Mammary epithelial cell (primary cell): ENCODE measurements at regions of chr5 and their contacts with region 1.

Region 1: DNA sequence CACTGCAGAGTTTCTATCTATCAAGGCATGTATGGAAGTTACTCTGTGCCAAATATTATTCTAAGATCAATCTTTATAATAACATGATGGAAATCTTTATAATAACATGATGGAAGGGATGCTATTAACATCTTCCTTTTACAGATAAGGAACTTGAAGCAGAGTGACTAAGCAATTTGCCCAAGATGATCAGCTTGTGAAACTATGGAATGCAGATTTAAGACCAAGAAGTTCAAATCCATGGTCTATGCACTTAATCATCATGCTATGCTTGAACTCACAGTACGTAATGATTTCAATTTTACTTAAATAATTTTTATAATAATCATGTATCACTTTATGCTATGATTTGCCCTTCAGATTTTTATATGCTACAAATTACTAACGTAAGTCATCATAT is 123.1 kb downstream of the DNAH5 start:
- DNase-seq: no peak
- H3K4me3 ChIP-seq: no peak overlapping the region
- H3K27ac ChIP-seq: no peak overlapping the region
- H3K4me1 ChIP-seq: no peaks in the 10 kb centered on the region
- H3K27me3 ChIP-seq: no peaks in the 10 kb centered on the region
- CTCF ChIP-seq: no peak

Region 2: DNA sequence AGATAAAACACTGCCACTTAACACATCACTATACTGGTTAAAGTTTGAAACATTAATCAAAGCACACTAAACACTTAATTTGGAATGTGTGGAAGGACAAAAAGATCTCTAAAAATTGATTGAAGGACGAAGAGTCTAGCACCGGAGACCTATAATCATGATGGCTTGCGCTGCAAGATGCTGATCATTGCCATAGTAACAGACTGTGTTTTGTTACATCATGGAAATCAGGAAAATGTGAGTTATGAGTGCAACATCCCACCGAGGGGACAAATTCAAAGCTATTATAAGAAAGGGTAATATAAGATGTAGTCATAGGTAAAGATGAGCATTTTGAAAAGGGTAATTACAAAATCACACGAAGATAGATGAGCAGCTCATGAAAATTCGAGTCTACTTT is 1638.4 kb before region 1 on chr5:
- CTCF ChIA-PET with region 1: no interaction called
- dilution Hi-C with region 1: no loop called
- in situ Hi-C with region 1: no loop called
- intact Hi-C with region 1: no loop called
- DNase-seq: no peak
- H3K4me3 ChIP-seq: no peak overlapping the region
- H3K27ac ChIP-seq: no peak overlapping the region
- H3K4me1 ChIP-seq: no peaks in the 10 kb centered on the region
- H3K27me3 ChIP-seq: no peaks in the 10 kb centered on the region
- CTCF ChIP-seq: no peak

Region 3: GRCh38 chr5:12292610-12293204 is 1528.7 kb before region 1 on chr5:
- CTCF ChIA-PET with region 1: no interaction called
- dilution Hi-C with region 1: no loop called
- in situ Hi-C with region 1: no loop called
- intact Hi-C with region 1: loop called (anchors 10 kb)
- DNase-seq: peak; percentile 6
- H3K4me3 ChIP-seq: no peak overlapping the region
- H3K27ac ChIP-seq: no peak overlapping the region
- H3K4me1 ChIP-seq: no peaks in the 10 kb centered on the region
- H3K27me3 ChIP-seq: no peaks in the 10 kb centered on the region
- CTCF ChIP-seq: peak; percentile 49 to 58